Motor neuron (in vitro differentiated cells): ENCODE measurements at regions of chr3 and their contacts with region 1.

Region 1: DNA sequence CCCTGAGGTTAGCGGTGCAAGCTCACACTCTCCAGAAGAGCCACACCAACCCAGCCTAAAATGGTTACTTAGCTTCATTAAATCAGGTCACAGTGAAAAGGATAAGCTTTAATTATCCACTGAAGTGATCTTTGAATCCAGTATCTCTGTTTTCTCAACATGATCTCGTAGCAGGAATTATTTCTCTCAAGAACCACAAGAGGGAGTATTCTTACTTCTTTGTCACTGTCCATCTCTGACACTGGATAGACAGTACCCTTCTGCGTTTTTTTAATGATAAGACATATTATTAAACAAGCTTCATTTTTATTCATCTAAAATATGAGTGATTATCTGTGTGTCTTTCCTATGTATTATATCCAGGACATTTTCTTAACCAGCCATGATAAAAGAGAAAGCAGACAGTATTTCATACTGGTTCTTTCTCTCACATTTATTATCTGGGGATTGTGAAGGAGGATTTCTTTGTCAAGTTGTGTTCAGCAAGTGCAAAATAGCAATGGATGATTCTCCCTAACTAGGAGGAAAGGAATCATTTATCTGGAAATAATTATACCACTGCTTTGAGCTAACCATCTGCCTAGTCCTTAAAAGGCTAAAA is 105.4 kb upstream of the CCDC54 start:
- ATAC-seq: peak; percentile 50 to 76 (median 68)
- H3K4me3 ChIP-seq: no peak overlapping the region
- H3K27ac ChIP-seq: no peak overlapping the region
- H3K4me1 ChIP-seq: no peaks in the 10 kb centered on the region

Region 2: GRCh38 chr3:107414325-107414964 is 142.6 kb after region 1 on chr3:
- in situ Hi-C with region 1: loop called in 3 of 9 experiments (anchors 10 to 25 kb)
- ATAC-seq: no peak
- H3K4me3 ChIP-seq: no peak overlapping the region
- H3K27ac ChIP-seq: no peak overlapping the region
- H3K4me1 ChIP-seq: no peaks in the 10 kb centered on the region

Region 3: DNA sequence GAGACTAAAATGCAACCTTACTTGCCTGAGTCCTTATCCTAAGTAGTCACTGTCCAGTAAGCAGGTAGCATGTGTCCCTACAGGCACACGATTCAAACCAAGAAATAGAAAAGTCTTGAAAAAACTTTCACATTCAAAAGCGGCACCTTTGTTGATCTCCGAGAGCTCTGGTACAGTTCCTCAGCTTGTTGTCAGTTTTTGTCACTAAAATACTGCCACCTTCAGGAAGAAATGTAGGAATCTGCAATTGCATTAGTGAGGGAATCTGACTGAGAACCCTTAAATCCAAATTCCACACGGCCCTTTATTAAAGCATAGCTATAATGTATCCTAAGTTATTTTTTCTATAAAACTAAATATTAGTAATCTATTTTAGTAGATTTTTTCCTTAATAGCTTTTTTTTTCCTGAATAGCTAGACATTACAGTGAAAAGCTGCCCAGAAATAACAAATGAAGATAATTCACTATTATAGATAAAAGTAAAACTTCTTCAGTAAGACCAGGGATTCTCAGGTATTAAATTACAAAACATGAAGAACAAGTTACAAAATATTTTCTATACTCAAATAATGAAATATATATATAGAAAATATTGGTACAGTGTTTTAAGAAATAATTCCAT is 149.4 kb after region 1 on chr3:
- in situ Hi-C with region 1: loop called in 3 of 9 experiments (anchors 10 to 25 kb)
- ATAC-seq: peak; percentile 42 to 93 (median 64)
- H3K4me3 ChIP-seq: no peak overlapping the region
- H3K27ac ChIP-seq: no peak overlapping the region
- H3K4me1 ChIP-seq: no peaks in the 10 kb centered on the region